A673 (cell line): ENCODE measurements at regions of chr11 and their contacts with region 1.

Region 1: DNA sequence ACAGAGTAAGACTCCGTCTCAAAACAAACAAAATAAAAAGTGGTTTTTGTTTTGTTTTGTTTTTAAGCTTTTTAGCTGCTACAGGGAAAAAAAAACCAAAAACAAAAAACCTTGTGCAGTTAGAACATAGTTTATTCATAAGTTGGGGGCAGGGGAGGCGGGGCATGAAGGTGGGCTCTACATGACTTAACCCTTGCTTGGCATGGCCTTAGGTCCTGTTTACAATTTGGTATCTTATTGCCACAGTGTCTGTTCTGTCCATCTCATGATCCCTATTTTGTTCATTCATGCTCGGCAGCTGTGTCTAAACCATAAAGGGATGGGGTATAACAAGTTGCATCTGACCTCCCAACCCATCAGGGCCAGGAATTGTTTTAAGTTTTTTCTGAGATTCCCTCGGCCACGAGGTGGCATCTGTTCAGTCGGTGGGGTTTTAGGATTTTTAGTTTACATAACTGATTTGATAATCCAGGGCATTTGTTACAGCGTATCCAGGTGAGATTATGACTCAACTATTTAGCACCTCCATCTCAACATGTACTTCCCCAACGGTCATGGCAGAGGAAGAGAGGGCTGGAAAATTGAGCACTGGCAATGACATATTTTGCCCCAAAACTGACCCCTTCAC is 6.9 kb downstream of the AP5B1 start:
- DNase-seq: no peak
- H3K4me3 ChIP-seq: no peak overlapping the region
- H3K27ac ChIP-seq: no peak overlapping the region
- H3K4me1 ChIP-seq: no peaks in the 10 kb centered on the region
- H3K27me3 ChIP-seq: no peaks in the 10 kb centered on the region
- CTCF ChIP-seq: peak; percentile 55

Region 2: GRCh38 chr11:65660038-65660437 is 113.9 kb before region 1 on chr11:
- CTCF ChIA-PET with region 1: no interaction called
- POLR2A ChIA-PET with region 1: no interaction called
- intact Hi-C with region 1: no loop called
- DNase-seq: no peak
- H3K4me3 ChIP-seq: no peak overlapping the region
- H3K27ac ChIP-seq: no peak overlapping the region
- H3K4me1 ChIP-seq: peaks cover 7% of the 10 kb centered on the region
- H3K27me3 ChIP-seq: no peaks in the 10 kb centered on the region
- CTCF ChIP-seq: no peak

Region 3: GRCh38 chr11:65672186-65672860 is 101.6 kb before region 1 on chr11:
- CTCF ChIA-PET with region 1: no interaction called
- POLR2A ChIA-PET with region 1: no interaction called
- intact Hi-C with region 1: no loop called
- DNase-seq: no peak
- H3K4me3 ChIP-seq: no peak overlapping the region
- H3K27ac ChIP-seq: no peak overlapping the region
- H3K4me1 ChIP-seq: no peaks in the 10 kb centered on the region
- H3K27me3 ChIP-seq: no peaks in the 10 kb centered on the region
- CTCF ChIP-seq: no peak

Region 4: GRCh38 chr11:65988791-65989592 is 215.1 kb after region 1 on chr11:
- CTCF ChIA-PET with region 1: interaction called, 7 read pairs
- POLR2A ChIA-PET with region 1: interaction called, 3 read pairs
- intact Hi-C with region 1: loop called (anchors 5 kb)
- DNase-seq: peak; percentile 97
- H3K4me3 ChIP-seq: no peak overlapping the region
- H3K27ac ChIP-seq: no peak overlapping the region
- H3K4me1 ChIP-seq: no peaks in the 10 kb centered on the region
- H3K27me3 ChIP-seq: no peaks in the 10 kb centered on the region
- CTCF ChIP-seq: peak; percentile 100